ENCODE measurements at regions of chr12 and their contacts with region 1.

Region 1: GRCh38 chr12:10331642-10332239 is 24.1 kb downstream of the KLRD1 start:
- DNase-seq: peak; percentile 72
- H3K4me3 Mint-ChIP-seq: no peak overlapping the region
- H3K27ac Mint-ChIP-seq: no peak overlapping the region
- H3K4me1 Mint-ChIP-seq: peaks cover 22% of the 10 kb centered on the region
- H3K27me3 Mint-ChIP-seq: no peaks in the 10 kb centered on the region
- CTCF ChIP-seq: peak; percentile 63

Region 2: DNA sequence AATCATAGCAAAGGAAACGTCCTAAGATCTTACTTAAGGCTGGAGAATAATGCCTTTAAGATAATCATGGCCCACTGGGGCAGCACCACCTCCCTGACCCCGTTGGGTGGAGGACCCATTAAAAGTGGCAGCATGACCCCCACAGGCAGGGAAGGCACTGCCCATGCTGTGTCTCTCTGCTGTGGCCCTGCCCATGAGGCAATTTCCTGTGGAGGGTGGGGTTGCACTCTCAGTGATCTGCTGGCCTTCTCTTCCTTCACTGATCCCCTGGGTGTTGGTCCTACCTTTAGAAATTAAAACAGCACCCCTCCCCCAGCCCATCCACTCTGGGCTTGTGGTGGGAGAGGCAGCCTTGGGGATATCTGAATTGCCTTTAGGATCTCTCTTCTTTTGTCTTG is 40.8 kb after region 1 on chr12:
- CTCF ChIA-PET with region 1: no interaction called
- POLR2A ChIA-PET with region 1: no interaction called
- intact Hi-C with region 1: no loop called
- DNase-seq: no peak
- H3K4me3 Mint-ChIP-seq: no peak overlapping the region
- H3K27ac Mint-ChIP-seq: peak overlapping the region; percentile 1
- H3K4me1 Mint-ChIP-seq: peaks cover 29% of the 10 kb centered on the region
- H3K27me3 Mint-ChIP-seq: no peaks in the 10 kb centered on the region
- CTCF ChIP-seq: no peak

Region 3: DNA sequence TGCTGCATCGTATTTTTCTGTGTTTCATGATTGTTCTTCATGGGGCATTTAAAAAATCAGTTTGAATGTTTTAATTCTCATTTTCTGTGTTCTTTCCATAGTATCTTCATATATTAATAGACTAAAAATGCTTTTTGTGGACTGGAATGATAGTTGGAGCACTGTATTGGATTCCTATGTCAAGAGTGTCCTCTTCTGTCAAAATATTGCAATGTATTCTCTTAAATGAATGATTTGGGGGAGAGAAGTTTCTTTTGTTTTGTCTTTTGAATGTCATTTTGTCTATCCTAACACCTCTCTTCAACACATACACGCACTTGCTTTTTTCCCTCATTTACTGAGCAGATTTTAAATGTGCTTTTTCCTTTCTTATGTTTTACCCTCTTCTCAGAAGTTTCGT is 169.3 kb after region 1 on chr12:
- CTCF ChIA-PET with region 1: interaction called, 6 read pairs
- POLR2A ChIA-PET with region 1: no interaction called
- intact Hi-C with region 1: loop called (anchors 1 kb)
- DNase-seq: peak; percentile 26
- H3K4me3 Mint-ChIP-seq: no peak overlapping the region
- H3K27ac Mint-ChIP-seq: no peak overlapping the region
- H3K4me1 Mint-ChIP-seq: peaks cover 6% of the 10 kb centered on the region
- H3K27me3 Mint-ChIP-seq: no peaks in the 10 kb centered on the region
- CTCF ChIP-seq: peak; percentile 65

Region 4: GRCh38 chr12:10673660-10674384 is 342.1 kb after region 1 on chr12 and contains the start of gene STYK1:
- CTCF ChIA-PET with region 1: interaction called, 5 read pairs
- POLR2A ChIA-PET with region 1: no interaction called
- intact Hi-C with region 1: loop called (anchors 1 kb)
- DNase-seq: peak; percentile 72
- H3K4me3 Mint-ChIP-seq: peak within 1 kb of the TSS; percentile 74
- H3K27ac Mint-ChIP-seq: no peak within 1 kb of the TSS
- H3K4me1 Mint-ChIP-seq: no peaks in the 10 kb centered on the region
- H3K27me3 Mint-ChIP-seq: no peaks in the 10 kb centered on the region
- CTCF ChIP-seq: peak; percentile 96
- total RNA-seq, gene STYK1: 0.14 and 0.56 TPM in 2 replicates

Measured in MCF 10A (cell line).